ENCODE measurements at regions of chr18 and their contacts with region 1.

Region 1: GRCh38 chr18:26383454-26384270 is 157.4 kb downstream of the TAF4B start:
- H3K4me3 Mint-ChIP-seq: no peak overlapping the region
- H3K27ac Mint-ChIP-seq: no peak overlapping the region
- H3K4me1 Mint-ChIP-seq: no peaks in the 10 kb centered on the region
- H3K27me3 Mint-ChIP-seq: no peaks in the 10 kb centered on the region

Region 2: GRCh38 chr18:25875551-25876240 is 508.0 kb before region 1 on chr18:
- intact Hi-C with region 1: no loop called
- H3K4me3 Mint-ChIP-seq: no peak overlapping the region
- H3K27ac Mint-ChIP-seq: no peak overlapping the region
- H3K4me1 Mint-ChIP-seq: no peaks in the 10 kb centered on the region
- H3K27me3 Mint-ChIP-seq: no peaks in the 10 kb centered on the region

Region 3: DNA sequence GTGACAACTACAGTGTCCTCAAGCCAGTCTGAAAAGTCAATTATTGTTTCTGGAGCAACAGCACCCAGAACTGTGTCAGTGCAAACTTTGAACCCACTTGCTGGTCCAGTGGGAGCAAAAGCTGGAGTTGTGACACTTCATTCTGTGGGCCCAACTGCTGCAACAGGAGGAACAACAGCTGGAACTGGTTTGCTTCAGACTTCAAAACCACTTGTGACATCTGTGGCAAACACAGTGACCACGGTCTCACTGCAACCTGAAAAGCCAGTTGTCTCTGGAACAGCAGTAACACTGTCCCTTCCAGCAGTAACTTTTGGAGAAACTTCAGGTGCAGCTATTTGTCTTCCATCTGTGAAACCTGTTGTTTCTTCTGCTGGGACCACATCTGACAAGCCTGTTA is 97.7 kb before region 1 on chr18:
- intact Hi-C with region 1: no loop called
- H3K4me3 Mint-ChIP-seq: no peak overlapping the region
- H3K27ac Mint-ChIP-seq: no peak overlapping the region
- H3K4me1 Mint-ChIP-seq: no peaks in the 10 kb centered on the region
- H3K27me3 Mint-ChIP-seq: no peaks in the 10 kb centered on the region

Region 4: DNA sequence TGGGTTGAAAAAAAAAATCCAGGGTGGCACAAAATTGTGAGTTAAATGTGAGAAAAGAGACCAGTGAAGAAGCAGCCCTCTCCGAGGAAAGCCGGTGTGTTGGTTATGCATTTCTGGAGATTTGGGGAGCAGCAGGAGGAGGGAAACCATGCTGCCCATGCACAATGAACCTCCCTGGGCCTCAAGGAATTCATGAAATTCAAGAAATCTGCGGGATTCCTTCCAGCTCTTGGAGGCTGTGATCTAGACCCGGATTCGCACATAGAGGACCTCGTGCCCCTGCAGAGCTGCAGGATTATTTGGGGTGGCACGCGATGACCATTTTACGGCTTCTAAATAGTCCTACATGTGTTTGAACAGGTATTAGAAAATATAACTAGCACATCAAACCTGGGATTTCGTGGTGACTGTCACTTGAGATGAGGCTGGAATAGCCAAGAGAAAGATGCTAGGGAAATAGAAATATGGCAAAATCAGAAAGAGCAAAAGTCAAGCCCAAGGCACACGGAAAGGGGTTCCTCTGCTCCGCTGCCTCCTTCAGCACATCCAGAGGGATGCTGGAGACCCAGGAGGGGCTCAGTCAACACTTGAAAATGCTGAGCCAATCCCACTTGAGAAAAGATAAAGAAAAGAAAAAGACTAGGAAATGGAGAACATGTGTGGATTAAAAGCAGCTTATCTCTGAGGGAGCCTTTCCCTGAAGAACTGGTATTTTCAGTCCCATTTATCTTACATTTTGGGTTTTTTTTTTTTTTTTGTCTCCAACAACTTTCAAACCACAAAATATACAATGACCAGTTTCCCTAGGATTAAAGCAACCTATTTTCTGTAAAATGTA is 142.7 kb after region 1 on chr18:
- intact Hi-C with region 1: no loop called
- H3K4me3 Mint-ChIP-seq: no peak overlapping the region
- H3K27ac Mint-ChIP-seq: no peak overlapping the region
- H3K4me1 Mint-ChIP-seq: peaks cover 23% of the 10 kb centered on the region
- H3K27me3 Mint-ChIP-seq: peaks cover 2% of the 10 kb centered on the region

Region 5: DNA sequence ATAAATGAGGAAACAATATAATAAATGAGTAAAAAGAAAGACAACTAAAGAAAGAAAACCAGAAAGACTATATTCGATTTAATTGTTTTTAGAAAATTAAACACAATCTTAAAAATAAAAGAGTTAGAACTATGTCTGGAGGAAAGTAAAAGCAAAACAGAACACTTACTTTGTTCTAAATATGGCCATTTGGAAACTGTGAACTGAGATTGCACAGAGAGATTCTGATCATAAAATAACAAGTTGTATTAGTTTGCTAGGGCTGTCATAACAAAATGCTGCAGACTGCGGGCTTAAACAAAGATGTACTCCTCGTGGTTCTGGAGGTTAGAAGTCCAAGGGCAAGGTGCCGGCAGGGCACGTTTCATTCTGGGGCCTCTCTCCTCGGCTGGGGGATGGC is 609.9 kb after region 1 on chr18:
- intact Hi-C with region 1: loop called (anchors 10 kb)
- H3K4me3 Mint-ChIP-seq: no peak overlapping the region
- H3K27ac Mint-ChIP-seq: no peak overlapping the region
- H3K4me1 Mint-ChIP-seq: no peaks in the 10 kb centered on the region
- H3K27me3 Mint-ChIP-seq: no peaks in the 10 kb centered on the region

Region 6: GRCh38 chr18:27263369-27263768 is 879.7 kb after region 1 on chr18:
- intact Hi-C with region 1: no loop called
- H3K4me3 Mint-ChIP-seq: no peak overlapping the region
- H3K27ac Mint-ChIP-seq: no peak overlapping the region
- H3K4me1 Mint-ChIP-seq: no peaks in the 10 kb centered on the region
- H3K27me3 Mint-ChIP-seq: no peaks in the 10 kb centered on the region

Measured in dendritic cell treated with granulocyte-macrophage colony-stimulating factor and Interleukin-4, amounts not matched to agents 40 ng/mL and 50 ng/mL, for 4 days (primary cell).